CD4-positive, alpha-beta T cell (primary cell): ENCODE measurements at regions of chr18 and their contacts with region 1.

Region 1: GRCh38 chr18:23586249-23587196 is at the start of gene NPC1:
- DNase-seq: peak; percentile 83 to 96 (median 90)
- ATAC-seq: peak; percentile 92
- H3K4me3 ChIP-seq: peak within 1 kb of the TSS; percentile 80
- H3K4me3 Mint-ChIP-seq: peak within 1 kb of the TSS; percentile 95
- H3K27ac ChIP-seq: peak within 1 kb of the TSS; percentile 96 to 98
- H3K27ac Mint-ChIP-seq: peak within 1 kb of the TSS; percentile 95
- H3K4me1 ChIP-seq: peaks cover 44% of the 10 kb centered on the region
- H3K4me1 Mint-ChIP-seq: peaks cover 37% of the 10 kb centered on the region
- H3K27me3 ChIP-seq: no peaks in the 10 kb centered on the region
- H3K27me3 Mint-ChIP-seq: no peaks in the 10 kb centered on the region
- CTCF ChIP-seq: peak; percentile 97
- total RNA-seq, gene NPC1: 17.2 to 17.6 TPM

Region 2: GRCh38 chr18:23452728-23453679 is 133.5 kb before region 1 on chr18 and contains the start of gene RIOK3:
- CTCF ChIA-PET with region 1: no interaction called
- POLR2A ChIA-PET with region 1: no interaction called
- intact Hi-C with region 1: loop called (anchors 5 kb)
- DNase-seq: peak; percentile 66 to 94 (median 82)
- ATAC-seq: peak; percentile 88
- H3K4me3 ChIP-seq: peak within 1 kb of the TSS; percentile 88
- H3K4me3 Mint-ChIP-seq: peak within 1 kb of the TSS; percentile 98
- H3K27ac ChIP-seq: peak within 1 kb of the TSS; percentile 80 to 81
- H3K27ac Mint-ChIP-seq: peak within 1 kb of the TSS; percentile 89
- H3K4me1 ChIP-seq: peaks cover 22% of the 10 kb centered on the region
- H3K4me1 Mint-ChIP-seq: peaks cover 53% of the 10 kb centered on the region
- H3K27me3 ChIP-seq: no peaks in the 10 kb centered on the region
- H3K27me3 Mint-ChIP-seq: no peaks in the 10 kb centered on the region
- CTCF ChIP-seq: no peak
- total RNA-seq, gene RIOK3: 151 to 153 TPM

Region 3: DNA sequence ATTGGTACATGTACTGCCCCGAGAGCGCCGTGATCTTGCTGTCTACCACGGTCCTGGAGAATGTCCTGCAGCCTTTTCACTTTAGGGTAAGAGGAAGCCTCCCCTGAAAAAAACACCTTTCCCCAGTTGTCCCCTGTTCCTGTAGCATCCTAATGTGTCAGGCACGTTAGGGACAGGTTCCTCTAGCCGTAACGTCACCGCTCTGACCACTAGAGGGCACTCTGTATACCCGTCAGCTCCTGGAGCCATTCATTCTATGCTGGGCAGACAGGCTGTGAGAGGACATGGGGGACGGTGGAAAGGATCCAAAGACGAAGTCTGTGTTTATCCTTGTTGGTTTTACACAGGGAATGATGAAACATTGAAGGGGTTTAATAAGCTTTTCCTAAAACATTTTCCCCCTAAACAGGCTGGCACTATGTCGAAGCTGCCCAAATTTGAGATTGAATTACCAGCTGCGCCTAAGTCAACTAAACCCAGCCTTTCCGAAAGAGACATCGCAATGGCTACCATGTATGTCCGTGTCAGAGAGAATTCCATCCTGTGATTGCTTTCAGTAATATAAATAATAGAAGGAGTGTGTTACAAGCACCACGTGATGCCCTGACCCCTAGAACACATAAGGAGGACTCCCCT is 70.5 kb before region 1 on chr18:
- CTCF ChIA-PET with region 1: interaction called, 14 read pairs
- POLR2A ChIA-PET with region 1: interaction called, 10 read pairs
- intact Hi-C with region 1: loop called (anchors 1 kb)
- DNase-seq: peak; percentile 64 to 88 (median 66)
- ATAC-seq: peak; percentile 99
- H3K4me3 ChIP-seq: no peak overlapping the region
- H3K4me3 Mint-ChIP-seq: no peak overlapping the region
- H3K27ac ChIP-seq: no peak overlapping the region
- H3K27ac Mint-ChIP-seq: peak overlapping the region; percentile 28
- H3K4me1 ChIP-seq: peaks cover 10% of the 10 kb centered on the region
- H3K4me1 Mint-ChIP-seq: peaks cover 24% of the 10 kb centered on the region
- H3K27me3 ChIP-seq: no peaks in the 10 kb centered on the region
- H3K27me3 Mint-ChIP-seq: no peaks in the 10 kb centered on the region
- CTCF ChIP-seq: peak; percentile 87

Region 4: DNA sequence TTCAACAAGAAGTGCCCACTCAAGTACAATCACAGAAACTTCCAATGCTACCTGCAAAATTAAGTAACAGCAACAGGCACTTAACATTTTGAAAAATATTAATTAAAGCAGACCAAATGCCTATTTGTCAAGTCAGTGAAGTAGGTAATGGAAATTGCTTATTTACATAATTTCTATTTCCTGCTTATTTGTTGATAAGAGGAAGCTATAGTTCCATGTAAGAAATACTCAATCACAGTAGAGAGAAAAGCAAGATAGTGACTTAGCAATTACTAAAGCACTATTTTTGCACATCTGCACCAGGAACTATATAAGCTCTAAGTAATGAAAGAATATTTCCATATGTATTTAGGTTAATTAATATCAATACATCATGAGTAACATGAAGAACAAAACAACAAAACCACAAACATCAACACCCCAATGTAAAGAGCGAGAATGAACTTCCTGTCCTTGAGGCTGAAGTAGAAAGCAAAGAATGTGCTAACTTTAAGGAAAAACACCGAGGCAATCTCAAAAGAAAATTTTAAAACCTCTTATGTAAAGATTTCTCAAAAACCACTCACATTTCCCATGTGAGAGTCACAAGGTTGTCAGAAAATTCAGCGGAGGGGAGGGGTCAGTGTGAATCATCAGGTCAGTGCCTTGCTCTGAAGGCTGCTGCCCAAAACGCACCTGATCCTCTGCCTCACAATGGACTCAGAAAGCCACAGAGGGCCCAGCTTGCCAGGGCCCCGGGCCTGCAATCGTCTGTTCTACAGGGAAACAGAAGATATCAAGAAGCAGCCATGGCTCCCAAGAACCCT is 12.7 kb before region 1 on chr18:
- CTCF ChIA-PET with region 1: interaction called, 6 read pairs
- POLR2A ChIA-PET with region 1: interaction called, 13 read pairs
- intact Hi-C with region 1: no loop called
- DNase-seq: peak in 6 of 14 experiments; percentile 11 to 71 (median 60)
- ATAC-seq: peak; percentile 46
- H3K4me3 ChIP-seq: peak overlapping the region; percentile 11
- H3K4me3 Mint-ChIP-seq: peak overlapping the region; percentile 7
- H3K27ac ChIP-seq: peak overlapping the region; percentile 51 to 87
- H3K27ac Mint-ChIP-seq: peak overlapping the region; percentile 81
- H3K4me1 ChIP-seq: peaks cover 51% of the 10 kb centered on the region
- H3K4me1 Mint-ChIP-seq: peaks cover 41% of the 10 kb centered on the region
- H3K27me3 ChIP-seq: no peaks in the 10 kb centered on the region
- H3K27me3 Mint-ChIP-seq: no peaks in the 10 kb centered on the region
- CTCF ChIP-seq: no peak